ENCODE measurements at regions of chr5 and their contacts with region 1.

Region 1: DNA sequence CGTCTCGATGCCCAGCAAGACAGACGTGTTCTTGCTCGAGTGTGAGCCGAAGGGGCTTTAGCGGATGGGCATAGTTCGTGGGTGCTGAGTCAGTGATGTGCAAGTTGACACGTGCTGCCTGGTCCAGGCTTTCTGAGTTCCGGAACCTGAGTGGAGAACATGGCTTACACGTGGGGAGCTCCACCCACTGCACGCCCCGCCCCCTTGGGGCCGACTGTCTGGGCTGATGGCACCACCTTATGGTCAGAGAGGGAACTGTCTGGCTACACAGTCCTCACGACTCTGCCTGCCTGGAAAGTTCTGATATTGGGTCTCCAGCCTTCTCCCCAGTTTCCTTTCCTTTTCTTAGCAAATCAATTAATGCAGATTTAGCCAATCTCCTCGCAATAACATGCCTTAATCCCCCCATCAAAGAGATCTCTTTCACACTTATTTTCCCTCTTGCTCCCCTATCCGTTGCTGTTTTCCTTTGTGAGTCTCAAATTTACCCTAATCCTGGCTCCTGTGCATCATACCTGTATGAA is 3.8 kb upstream of the STC2 start:
- DNase-seq: peak; percentile 92
- H3K4me3 Mint-ChIP-seq: no peak overlapping the region
- H3K27ac Mint-ChIP-seq: peak overlapping the region; percentile 4
- H3K4me1 Mint-ChIP-seq: peaks cover 30% of the 10 kb centered on the region
- H3K27me3 Mint-ChIP-seq: peaks cover 32% of the 10 kb centered on the region

Region 2: GRCh38 chr5:173144200-173145176 is 187.5 kb before region 1 on chr5 and contains the start of gene BNIP1:
- CTCF ChIA-PET with region 1: interaction called, 10 read pairs
- POLR2A ChIA-PET with region 1: interaction called, 3 read pairs
- DNase-seq: peak; percentile 95
- H3K4me3 Mint-ChIP-seq: peak within 1 kb of the TSS; percentile 98
- H3K27ac Mint-ChIP-seq: peak within 1 kb of the TSS; percentile 92
- H3K4me1 Mint-ChIP-seq: peaks cover 17% of the 10 kb centered on the region
- H3K27me3 Mint-ChIP-seq: no peaks in the 10 kb centered on the region
- total RNA-seq, gene BNIP1: 13.2 to 13.3 TPM

Region 3: GRCh38 chr5:173293817-173294672 is 38.0 kb before region 1 on chr5:
- CTCF ChIA-PET with region 1: interaction called, 136 read pairs
- POLR2A ChIA-PET with region 1: interaction called, 4 read pairs
- DNase-seq: peak; percentile 73
- H3K4me3 Mint-ChIP-seq: peak overlapping the region; percentile 43
- H3K27ac Mint-ChIP-seq: no peak overlapping the region
- H3K4me1 Mint-ChIP-seq: peaks cover 12% of the 10 kb centered on the region
- H3K27me3 Mint-ChIP-seq: peaks cover 46% of the 10 kb centered on the region

Region 4: DNA sequence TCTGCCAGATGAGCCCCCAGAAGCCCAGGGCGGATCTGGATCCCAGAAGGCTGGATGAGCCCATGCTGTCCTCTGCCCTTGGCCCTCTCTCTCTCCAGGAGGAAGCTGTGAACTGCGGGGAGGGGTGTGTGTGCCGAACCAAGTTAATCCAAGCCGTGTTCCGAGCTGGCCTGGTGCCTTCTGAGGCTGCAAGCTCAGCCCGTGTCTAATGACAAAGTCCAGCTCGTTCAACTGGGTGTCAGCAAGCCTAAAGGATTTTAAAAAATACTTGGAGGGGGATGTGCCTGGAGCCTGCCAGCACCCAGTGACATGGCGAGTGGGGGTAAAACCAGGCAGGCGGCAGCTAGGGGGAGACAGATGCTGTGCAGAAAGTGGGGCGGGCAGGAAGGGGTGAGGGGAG is 11.8 kb before region 1 on chr5:
- CTCF ChIA-PET with region 1: interaction called, 13 read pairs
- POLR2A ChIA-PET with region 1: interaction called, 3 read pairs
- DNase-seq: no peak
- H3K4me3 Mint-ChIP-seq: no peak overlapping the region
- H3K27ac Mint-ChIP-seq: no peak overlapping the region
- H3K4me1 Mint-ChIP-seq: peaks cover 16% of the 10 kb centered on the region
- H3K27me3 Mint-ChIP-seq: peaks cover 7% of the 10 kb centered on the region

Region 5: DNA sequence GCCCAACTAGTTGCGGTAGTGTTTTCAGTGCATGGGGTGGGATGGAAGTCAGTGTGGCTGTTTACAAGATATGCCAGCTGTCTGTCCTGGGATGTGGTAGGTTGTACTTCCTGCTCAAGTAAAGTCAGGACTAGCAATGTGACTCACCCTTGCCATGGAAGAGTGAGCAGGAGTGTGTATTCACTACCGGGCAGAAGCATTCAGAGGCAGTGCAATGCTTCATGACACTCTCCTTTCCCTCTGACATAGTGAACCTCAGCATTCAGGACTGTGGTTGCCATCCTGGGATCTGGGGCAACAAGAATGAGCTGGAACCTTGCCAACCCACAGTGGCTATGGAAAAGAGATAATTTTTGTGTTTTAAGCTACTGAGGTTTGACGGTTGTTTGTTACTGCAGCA is 215.6 kb after region 1 on chr5:
- CTCF ChIA-PET with region 1: no interaction called
- POLR2A ChIA-PET with region 1: no interaction called
- DNase-seq: no peak
- H3K4me3 Mint-ChIP-seq: no peak overlapping the region
- H3K27ac Mint-ChIP-seq: no peak overlapping the region
- H3K4me1 Mint-ChIP-seq: no peaks in the 10 kb centered on the region
- H3K27me3 Mint-ChIP-seq: peaks cover 3% of the 10 kb centered on the region